ENCODE measurements at regions of chr17 and their contacts with region 1.

Region 1: DNA sequence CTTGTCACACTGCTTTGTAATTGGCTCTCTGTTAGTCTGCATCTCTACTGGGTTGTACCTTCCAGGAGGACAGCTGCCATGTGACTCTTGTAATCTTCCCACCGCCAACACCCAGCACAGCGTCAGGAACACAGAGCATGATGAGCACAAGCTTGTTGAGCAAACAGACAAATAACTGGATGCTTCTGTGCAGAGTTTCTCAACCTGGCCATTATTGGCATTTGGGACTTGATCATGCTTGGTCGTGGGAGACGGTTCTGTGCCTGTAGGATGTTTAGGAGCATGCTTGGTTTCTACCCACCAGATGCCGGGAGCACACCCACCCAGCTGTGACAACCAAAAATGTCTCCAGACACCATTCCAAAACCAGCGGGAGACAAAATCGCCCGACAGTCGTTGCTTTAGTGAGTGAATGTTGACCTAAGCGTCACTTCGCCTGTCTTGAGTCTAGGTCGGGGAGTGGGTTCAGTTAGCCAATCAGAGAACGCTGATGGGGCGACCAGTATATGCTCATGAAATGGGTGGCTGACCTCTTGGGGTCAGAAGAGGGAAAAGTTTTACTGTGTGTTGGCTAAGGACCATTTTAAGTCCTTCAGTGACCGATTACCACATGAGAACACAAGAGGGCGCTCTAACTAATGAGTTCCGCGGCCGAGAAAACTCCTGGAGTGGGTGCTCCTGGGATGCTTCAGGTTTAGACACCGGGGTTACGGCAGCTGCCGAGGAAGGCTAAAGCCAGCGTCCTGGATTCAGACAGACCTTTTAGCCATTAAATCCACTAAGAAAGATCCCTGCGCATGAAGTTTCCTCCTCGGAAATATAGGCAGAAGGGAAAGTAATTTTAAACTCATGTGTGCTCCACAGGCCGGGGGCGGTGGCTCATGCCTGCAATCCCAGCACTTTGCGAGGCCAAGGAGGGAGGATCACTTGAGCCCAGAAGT is 57.8 kb upstream of the TEX2 start:
- DNase-seq: peak; percentile 79
- ATAC-seq: peak; percentile 72
- H3K4me3 ChIP-seq: no peak overlapping the region
- H3K27ac ChIP-seq: no peak overlapping the region
- H3K4me1 ChIP-seq: peaks cover 76% of the 10 kb centered on the region
- H3K27me3 ChIP-seq: no peaks in the 10 kb centered on the region
- CTCF ChIP-seq: peak; percentile 91
- EP300 ChIP-seq: no peak
- POLR2A ChIP-seq: no peak
- RAD21 ChIP-seq: peak; percentile 80

Region 2: GRCh38 chr17:64385187-64386083 is 64.6 kb after region 1 on chr17:
- CTCF ChIA-PET with region 1: interaction called, 3 read pairs
- POLR2A ChIA-PET with region 1: interaction called, 3 read pairs
- in situ Hi-C with region 1: no loop called
- intact Hi-C with region 1: loop called (anchors 1 kb)
- DNase-seq: peak; percentile 96
- ATAC-seq: peak; percentile 81
- H3K4me3 ChIP-seq: peak overlapping the region; percentile 53 to 79 (median 78)
- H3K27ac ChIP-seq: peak overlapping the region; percentile 89
- H3K4me1 ChIP-seq: peaks cover 94% of the 10 kb centered on the region
- H3K27me3 ChIP-seq: no peaks in the 10 kb centered on the region; a peak in 1 of 5 replicates
- CTCF ChIP-seq: peak; percentile 28
- EP300 ChIP-seq: peak; percentile 72 to 95; a peak in 3 of 4 replicates
- POLR2A ChIP-seq: peak; percentile 71 to 72
- RAD21 ChIP-seq: no peak; the same call in 1 of the 2 replicates

Region 3: DNA sequence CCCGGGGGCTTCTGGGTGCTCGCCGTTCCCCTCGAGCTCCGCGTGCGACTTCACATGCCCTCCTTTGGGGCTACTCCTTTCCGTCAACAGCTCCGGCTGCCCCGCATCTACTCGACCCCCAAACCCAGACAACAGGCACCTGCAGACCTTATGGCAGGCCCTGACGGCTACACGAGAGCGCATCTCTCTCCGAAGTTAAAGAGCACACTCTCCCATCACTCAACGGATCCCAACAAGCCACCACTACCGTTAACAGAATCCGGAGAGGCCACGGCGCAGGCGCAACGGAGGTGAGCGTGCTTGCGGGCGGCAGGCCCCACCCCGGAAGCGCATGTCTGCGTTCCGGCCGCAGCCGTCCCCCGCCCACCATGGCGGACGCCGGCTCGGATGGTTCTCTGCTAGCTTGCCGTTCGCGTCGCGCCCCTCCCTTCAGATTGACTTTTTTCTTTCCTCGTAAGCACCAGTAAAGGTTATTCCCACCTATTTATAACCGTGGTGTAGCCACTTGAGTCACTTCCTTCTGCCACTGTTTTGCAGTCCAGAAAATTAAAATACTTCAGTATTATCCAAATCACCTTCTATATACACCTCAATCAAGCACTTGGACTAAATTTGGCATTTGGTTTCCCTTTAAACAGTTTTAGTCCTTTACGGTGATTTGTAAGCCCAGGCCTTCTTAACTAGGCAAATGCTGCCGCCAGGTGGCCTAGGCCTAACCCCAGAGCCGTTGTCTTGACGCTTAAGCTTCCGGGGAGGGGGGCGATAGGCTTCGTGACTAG is 176.1 kb after region 1 on chr17 and contains the start of gene POLG2:
- CTCF ChIA-PET with region 1: no interaction called
- POLR2A ChIA-PET with region 1: no interaction called
- in situ Hi-C with region 1: no loop called
- intact Hi-C with region 1: loop called (anchors 10 kb)
- DNase-seq: peak; percentile 92
- ATAC-seq: peak; percentile 86
- H3K4me3 ChIP-seq: peak within 1 kb of the TSS; percentile 65 to 90 (median 68)
- H3K27ac ChIP-seq: peak within 1 kb of the TSS; percentile 74
- H3K4me1 ChIP-seq: peaks cover 73% of the 10 kb centered on the region
- H3K27me3 ChIP-seq: no peaks in the 10 kb centered on the region; a peak in 1 of 5 replicates
- CTCF ChIP-seq: peak; percentile 79
- EP300 ChIP-seq: peak in 1 of 2 experiments; percentile 69; a peak in 1 of 4 replicates
- POLR2A ChIP-seq: peak; percentile 90 to 98
- RAD21 ChIP-seq: peak; percentile 59
- total RNA-seq, gene POLG2: 16.2 and 25.5 TPM in 2 replicates

Region 4: DNA sequence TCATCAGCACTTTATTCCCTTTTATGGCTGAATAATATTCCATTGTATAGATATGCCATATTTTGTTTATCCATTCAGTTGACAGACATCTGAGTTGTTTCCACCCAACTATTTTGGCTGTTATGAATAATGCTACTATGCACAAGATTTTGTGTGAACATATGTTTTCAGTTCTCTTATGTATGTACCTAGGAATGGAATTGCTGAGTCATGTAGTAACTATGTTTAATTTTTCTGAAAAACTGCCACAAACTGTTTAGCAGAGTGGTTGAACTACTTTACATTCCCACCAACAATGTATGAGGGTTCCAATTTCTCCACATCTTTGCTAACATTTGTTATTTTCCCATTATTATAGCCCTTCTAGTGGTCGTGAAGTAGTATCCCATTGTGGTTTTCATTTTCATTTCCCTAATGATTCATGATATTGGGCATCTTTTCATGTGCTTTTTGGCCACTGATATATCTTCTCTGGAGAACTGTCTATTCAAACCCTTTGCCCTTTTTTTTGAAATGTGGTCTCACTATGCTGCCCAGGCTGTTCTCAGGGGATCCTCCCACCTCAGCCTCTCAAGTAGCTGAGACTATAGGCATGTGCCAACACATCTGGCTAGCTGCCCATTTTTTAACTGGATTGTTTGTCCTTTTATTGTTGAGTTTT is 314.9 kb after region 1 on chr17:
- CTCF ChIA-PET with region 1: no interaction called
- POLR2A ChIA-PET with region 1: no interaction called
- in situ Hi-C with region 1: loop called (anchors 25 kb)
- intact Hi-C with region 1: loop called (anchors 10 kb)
- DNase-seq: no peak
- ATAC-seq: no peak
- H3K4me3 ChIP-seq: no peak overlapping the region
- H3K27ac ChIP-seq: no peak overlapping the region
- H3K4me1 ChIP-seq: peaks cover 16% of the 10 kb centered on the region
- H3K27me3 ChIP-seq: no peaks in the 10 kb centered on the region
- CTCF ChIP-seq: no peak
- EP300 ChIP-seq: no peak
- POLR2A ChIP-seq: no peak
- RAD21 ChIP-seq: no peak

Region 5: DNA sequence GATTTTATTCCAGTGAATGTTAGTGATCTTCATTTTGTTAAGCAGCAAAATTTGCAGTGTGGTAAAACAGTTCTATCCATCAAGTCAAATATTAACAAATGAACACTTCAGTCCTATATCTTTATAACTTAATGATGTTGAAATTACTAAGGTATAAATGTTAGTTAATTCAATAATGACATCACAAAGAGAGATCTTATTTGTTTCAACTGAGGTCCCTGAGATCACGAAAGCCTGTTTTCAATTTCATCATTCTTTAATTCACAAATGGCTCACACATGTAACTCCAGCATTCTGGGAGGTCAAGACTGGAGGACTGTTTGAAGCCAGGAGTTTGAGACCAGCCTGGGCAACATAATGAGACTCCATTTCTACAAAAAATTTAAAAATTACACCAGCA is 327.4 kb after region 1 on chr17:
- CTCF ChIA-PET with region 1: no interaction called
- POLR2A ChIA-PET with region 1: no interaction called
- in situ Hi-C with region 1: loop called (anchors 25 kb)
- intact Hi-C with region 1: loop called (anchors 10 kb)
- DNase-seq: no peak
- ATAC-seq: no peak
- H3K4me3 ChIP-seq: no peak overlapping the region
- H3K27ac ChIP-seq: no peak overlapping the region
- H3K4me1 ChIP-seq: peaks cover 14% of the 10 kb centered on the region
- H3K27me3 ChIP-seq: no peaks in the 10 kb centered on the region
- CTCF ChIP-seq: no peak
- EP300 ChIP-seq: no peak
- POLR2A ChIP-seq: no peak
- RAD21 ChIP-seq: no peak